H1 (cell line): ENCODE measurements at regions of chr7 and their contacts with region 1.

Region 1: DNA sequence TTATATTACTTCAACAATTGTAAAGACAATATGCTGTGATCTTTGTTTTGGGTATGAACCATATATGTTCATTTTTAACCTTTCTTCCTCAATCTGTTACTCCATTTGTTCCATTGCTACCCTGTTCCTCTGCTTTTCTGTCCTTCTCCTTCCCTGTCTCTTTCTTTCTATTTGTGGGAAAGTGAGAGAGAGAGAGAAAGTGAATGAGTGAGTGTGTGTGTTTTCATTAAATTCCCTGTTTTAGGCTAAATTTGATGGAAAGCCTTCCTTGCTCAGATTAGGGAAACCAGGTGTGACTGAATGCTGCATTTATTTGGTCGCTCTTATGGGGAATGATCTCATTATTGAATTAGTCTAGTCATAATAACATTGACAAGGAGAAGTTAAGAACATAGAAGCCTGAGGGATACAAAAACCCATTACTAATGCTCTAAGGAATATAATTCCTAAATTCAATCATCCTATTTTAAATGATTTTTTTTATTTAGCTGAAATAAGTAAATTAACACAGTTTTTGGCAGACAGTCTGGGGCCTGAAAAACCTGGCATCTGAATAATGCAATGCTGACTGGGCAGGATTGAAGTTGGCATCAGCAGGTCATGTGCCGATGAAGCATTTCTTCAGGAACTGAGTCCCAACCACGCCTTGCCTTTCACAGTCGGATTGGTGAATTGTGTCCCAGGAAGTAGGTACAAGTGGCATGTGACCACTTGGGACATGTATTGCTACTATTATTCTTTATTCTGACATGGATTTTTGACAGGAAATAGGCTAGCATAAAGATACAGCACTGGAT is 117.6 kb upstream of the LRGUK start:
- DNase-seq: no peak
- H3K4me3 ChIP-seq: no peak overlapping the region
- H3K27ac ChIP-seq: no peak overlapping the region
- H3K4me1 ChIP-seq: no peaks in the 10 kb centered on the region
- H3K27me3 ChIP-seq: no peaks in the 10 kb centered on the region
- CTCF ChIP-seq: no peak
- EP300 ChIP-seq: no peak
- POLR2A ChIP-seq: no peak
- RAD21 ChIP-seq: no peak

Region 2: GRCh38 chr7:133985300-133985699 is 24.2 kb before region 1 on chr7:
- CTCF ChIA-PET with region 1: no interaction called
- POLR2A ChIA-PET with region 1: no interaction called
- DNase-seq: no peak
- H3K4me3 ChIP-seq: no peak overlapping the region
- H3K27ac ChIP-seq: no peak overlapping the region
- H3K4me1 ChIP-seq: no peaks in the 10 kb centered on the region
- H3K27me3 ChIP-seq: no peaks in the 10 kb centered on the region
- CTCF ChIP-seq: no peak
- EP300 ChIP-seq: no peak
- POLR2A ChIP-seq: no peak
- RAD21 ChIP-seq: no peak

Region 3: GRCh38 chr7:134024739-134025138 is 15.2 kb after region 1 on chr7:
- CTCF ChIA-PET with region 1: interaction called, 11 read pairs
- POLR2A ChIA-PET with region 1: no interaction called
- DNase-seq: no peak
- H3K4me3 ChIP-seq: no peak overlapping the region
- H3K27ac ChIP-seq: no peak overlapping the region
- H3K4me1 ChIP-seq: peaks cover 0 to 10% (median 4%) of the 10 kb centered on the region in 4 experiments; a peak in 3 of 7 replicates
- H3K27me3 ChIP-seq: no peaks in the 10 kb centered on the region
- CTCF ChIP-seq: no peak
- EP300 ChIP-seq: no peak
- POLR2A ChIP-seq: no peak
- RAD21 ChIP-seq: no peak

Region 4: GRCh38 chr7:134084488-134085144 is 75.1 kb after region 1 on chr7:
- CTCF ChIA-PET with region 1: no interaction called
- POLR2A ChIA-PET with region 1: no interaction called
- DNase-seq: no peak
- H3K4me3 ChIP-seq: no peak overlapping the region
- H3K27ac ChIP-seq: no peak overlapping the region
- H3K4me1 ChIP-seq: no peaks in the 10 kb centered on the region
- H3K27me3 ChIP-seq: no peaks in the 10 kb centered on the region
- CTCF ChIP-seq: no peak
- EP300 ChIP-seq: no peak
- POLR2A ChIP-seq: no peak
- RAD21 ChIP-seq: no peak

Region 5: GRCh38 chr7:134098072-134098471 is 88.6 kb after region 1 on chr7:
- CTCF ChIA-PET with region 1: no interaction called
- POLR2A ChIA-PET with region 1: no interaction called
- DNase-seq: no peak
- H3K4me3 ChIP-seq: no peak overlapping the region
- H3K27ac ChIP-seq: no peak overlapping the region
- H3K4me1 ChIP-seq: no peaks in the 10 kb centered on the region
- H3K27me3 ChIP-seq: no peaks in the 10 kb centered on the region
- CTCF ChIP-seq: no peak
- EP300 ChIP-seq: no peak
- POLR2A ChIP-seq: no peak
- RAD21 ChIP-seq: no peak